Activated CD8-positive, alpha-beta T cell treated with anti-CD3 and anti-CD28 coated beads for 36 hours (primary cell): ENCODE measurements at regions of chr18 and their contacts with region 1.

Region 1: GRCh38 chr18:32092422-32093101 is 888 bp downstream of the RNF138 start:
- DNase-seq: peak; percentile 100
- ATAC-seq: peak; percentile 92
- H3K4me3 Mint-ChIP-seq: peak overlapping the region; percentile 97
- H3K27ac Mint-ChIP-seq: peak overlapping the region; percentile 97
- H3K4me1 Mint-ChIP-seq: peaks cover 41% of the 10 kb centered on the region
- H3K27me3 Mint-ChIP-seq: no peaks in the 10 kb centered on the region
- CTCF ChIP-seq: no peak

Region 2: DNA sequence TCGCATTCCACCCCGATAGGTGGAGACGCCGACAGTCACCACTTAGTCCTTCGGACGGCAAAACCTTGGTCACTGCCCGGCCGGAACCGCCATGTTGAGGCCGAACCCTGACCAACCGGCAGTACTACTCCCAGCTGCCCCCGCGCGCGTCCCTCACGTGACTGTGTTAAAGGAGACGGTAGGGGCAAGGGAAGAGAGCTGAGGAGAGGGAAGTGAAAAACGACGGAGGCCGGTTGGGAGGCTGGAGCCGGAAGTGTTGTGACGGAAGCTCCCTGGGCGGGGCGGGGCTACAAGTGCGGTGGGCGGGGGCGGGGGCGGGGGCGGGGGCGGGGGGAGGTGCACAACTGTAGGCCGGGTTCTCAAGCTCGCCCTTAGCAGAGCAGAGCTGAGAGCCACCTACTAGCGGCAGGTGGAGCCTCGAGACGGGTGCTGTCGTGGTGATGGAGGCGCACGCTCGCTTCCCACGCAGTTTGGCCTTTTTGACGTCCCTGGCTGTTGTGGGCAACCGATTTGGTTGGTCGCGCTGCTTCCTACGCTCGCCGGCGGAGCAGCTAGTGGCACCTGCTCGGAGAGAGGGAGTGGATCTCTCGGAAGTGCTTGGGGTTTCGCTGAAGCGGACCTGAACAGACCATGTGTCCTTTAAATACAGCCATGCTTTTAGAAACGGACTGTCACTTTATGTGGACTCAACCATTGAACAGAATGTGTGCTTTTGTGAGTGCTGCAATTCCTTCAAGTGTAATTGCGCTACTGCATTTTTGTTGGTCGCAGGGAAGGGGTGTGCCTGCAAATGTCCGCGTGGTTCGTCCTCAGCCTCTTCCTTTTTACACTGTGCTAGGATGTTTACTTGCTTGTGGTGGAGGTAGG is 149.3 kb before region 1 on chr18 and contains the start of gene TRAPPC8:
- CTCF ChIA-PET with region 1: no interaction called
- POLR2A ChIA-PET with region 1: interaction called, 12 read pairs
- intact Hi-C with region 1: loop called (anchors 5 kb)
- DNase-seq: peak; percentile 96
- ATAC-seq: peak; percentile 83
- H3K4me3 Mint-ChIP-seq: peak within 1 kb of the TSS; percentile 100
- H3K27ac Mint-ChIP-seq: peak within 1 kb of the TSS; percentile 99
- H3K4me1 Mint-ChIP-seq: peaks cover 33% of the 10 kb centered on the region
- H3K27me3 Mint-ChIP-seq: no peaks in the 10 kb centered on the region
- CTCF ChIP-seq: no peak
- total RNA-seq, gene TRAPPC8: 26.1 to 29.6 TPM

Region 3: GRCh38 chr18:32048507-32049091 is 44.0 kb before region 1 on chr18:
- CTCF ChIA-PET with region 1: no interaction called
- POLR2A ChIA-PET with region 1: interaction called, 11 read pairs
- intact Hi-C with region 1: loop called (anchors 5 kb)
- DNase-seq: peak; percentile 57
- ATAC-seq: peak; percentile 64
- H3K4me3 Mint-ChIP-seq: no peak overlapping the region
- H3K27ac Mint-ChIP-seq: peak overlapping the region; percentile 90
- H3K4me1 Mint-ChIP-seq: peaks cover 30% of the 10 kb centered on the region
- H3K27me3 Mint-ChIP-seq: no peaks in the 10 kb centered on the region
- CTCF ChIP-seq: no peak

Region 4: GRCh38 chr18:32148185-32148870 is 55.8 kb after region 1 on chr18:
- CTCF ChIA-PET with region 1: no interaction called
- POLR2A ChIA-PET with region 1: no interaction called
- intact Hi-C with region 1: no loop called
- DNase-seq: no peak
- ATAC-seq: no peak
- H3K4me3 Mint-ChIP-seq: no peak overlapping the region
- H3K27ac Mint-ChIP-seq: no peak overlapping the region
- H3K4me1 Mint-ChIP-seq: peaks cover 5% of the 10 kb centered on the region
- H3K27me3 Mint-ChIP-seq: no peaks in the 10 kb centered on the region
- CTCF ChIP-seq: no peak